ENCODE measurements at regions of chr17 and their contacts with region 1.

Region 1: GRCh38 chr17:11997147-11997846 is at the start of gene ZNF18:
- DNase-seq: peak; percentile 78
- H3K4me3 ChIP-seq: peak within 1 kb of the TSS; percentile 89
- H3K27ac ChIP-seq: peak within 1 kb of the TSS; percentile 86
- H3K27me3 ChIP-seq: no peaks in the 10 kb centered on the region
- CTCF ChIP-seq: no peak
- polyA plus RNA-seq, gene ZNF18: 7.6 and 8.2 TPM in 2 replicates

Region 2: DNA sequence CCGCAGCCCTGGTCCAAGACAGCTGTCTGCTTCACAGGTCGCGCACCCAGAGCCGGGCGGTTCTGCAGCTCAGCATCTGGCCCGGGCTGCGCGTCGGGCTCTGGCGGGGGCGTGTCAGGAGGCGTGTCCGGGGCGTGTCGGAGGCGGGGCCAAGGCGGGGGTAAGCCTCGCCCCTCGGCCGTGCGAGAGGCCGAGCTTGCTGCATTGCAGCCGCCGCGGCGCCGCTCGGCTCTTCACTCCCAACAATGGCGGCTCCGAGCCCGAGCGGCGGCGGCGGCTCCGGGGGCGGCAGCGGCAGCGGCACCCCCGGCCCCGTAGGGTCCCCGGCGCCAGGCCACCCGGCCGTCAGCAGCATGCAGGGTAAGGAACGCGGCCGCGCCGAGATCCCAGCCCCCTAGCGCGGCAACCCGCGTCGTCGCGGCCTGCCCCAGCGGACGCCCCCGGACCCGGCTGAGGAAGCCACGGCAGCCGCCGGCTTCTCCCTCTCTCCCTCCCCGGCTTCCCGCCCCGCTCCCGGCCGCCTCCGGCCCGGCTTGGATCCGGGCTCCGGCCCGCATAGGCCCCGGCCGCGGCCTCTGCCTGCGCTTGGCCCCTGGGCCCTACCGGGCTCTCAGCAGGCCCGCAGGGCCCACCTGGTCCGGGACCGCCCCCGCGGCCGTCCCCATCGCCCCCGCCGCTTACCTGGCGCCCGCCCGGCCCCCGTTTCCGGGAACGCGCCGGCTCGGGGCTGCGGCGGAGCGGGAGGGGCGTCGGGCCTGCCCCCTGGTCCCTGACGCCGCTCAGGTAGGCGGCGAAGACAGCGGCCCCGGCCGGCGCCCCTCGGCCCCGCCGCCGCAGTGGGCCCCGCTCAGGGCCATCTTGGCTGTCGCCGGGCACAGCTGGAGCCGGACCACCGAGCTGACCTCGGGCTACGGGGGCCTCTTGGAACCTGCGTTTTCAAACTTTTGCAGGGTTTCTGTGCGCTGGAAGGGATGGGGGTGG is 23.6 kb after region 1 on chr17 and contains the start of gene MAP2K4:
- CTCF ChIA-PET with region 1: no interaction called
- POLR2A ChIA-PET with region 1: interaction called, 48 read pairs
- DNase-seq: peak; percentile 64
- H3K4me3 ChIP-seq: peak within 1 kb of the TSS; percentile 62
- H3K27ac ChIP-seq: no peak within 1 kb of the TSS
- H3K27me3 ChIP-seq: no peaks in the 10 kb centered on the region
- CTCF ChIP-seq: no peak
- polyA plus RNA-seq, gene MAP2K4: 25.6 and 32.9 TPM in 2 replicates